ENCODE measurements at regions of chr1 and their contacts with region 1.

Region 1: DNA sequence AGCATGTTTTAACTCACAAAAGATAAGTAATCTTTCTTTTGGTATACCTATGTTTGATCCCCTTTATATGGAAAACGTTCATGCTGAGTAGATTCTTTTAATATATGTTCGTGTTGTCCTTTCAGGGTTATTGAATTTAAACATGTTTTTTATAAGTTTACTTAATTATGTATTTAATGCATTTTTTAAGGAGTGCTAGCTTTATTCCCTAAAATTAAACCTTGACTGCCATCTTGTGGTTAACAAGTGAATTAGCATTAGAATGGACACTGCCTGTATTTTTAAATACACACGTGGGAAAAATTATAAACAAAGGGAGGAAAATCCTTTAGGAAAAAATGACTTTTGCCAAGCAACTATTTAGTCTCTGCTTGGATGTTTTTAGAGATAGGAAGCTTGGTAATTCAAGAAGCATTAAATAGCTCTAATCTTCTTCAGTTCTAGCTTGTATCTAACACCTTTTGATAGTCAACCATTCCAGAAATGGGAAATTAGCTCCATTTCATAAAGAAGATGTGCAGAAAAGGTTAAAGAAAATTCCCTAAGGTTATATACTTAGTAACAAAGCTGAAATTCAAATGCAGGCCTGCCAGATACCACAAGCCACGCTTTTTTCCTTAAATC is 43.0 kb downstream of the UBE2U start:
- H3K4me3 Mint-ChIP-seq: no peak overlapping the region
- H3K27ac Mint-ChIP-seq: no peak overlapping the region
- H3K4me1 Mint-ChIP-seq: peaks cover 10% of the 10 kb centered on the region
- H3K27me3 Mint-ChIP-seq: peaks cover 11% of the 10 kb centered on the region

Region 2: DNA sequence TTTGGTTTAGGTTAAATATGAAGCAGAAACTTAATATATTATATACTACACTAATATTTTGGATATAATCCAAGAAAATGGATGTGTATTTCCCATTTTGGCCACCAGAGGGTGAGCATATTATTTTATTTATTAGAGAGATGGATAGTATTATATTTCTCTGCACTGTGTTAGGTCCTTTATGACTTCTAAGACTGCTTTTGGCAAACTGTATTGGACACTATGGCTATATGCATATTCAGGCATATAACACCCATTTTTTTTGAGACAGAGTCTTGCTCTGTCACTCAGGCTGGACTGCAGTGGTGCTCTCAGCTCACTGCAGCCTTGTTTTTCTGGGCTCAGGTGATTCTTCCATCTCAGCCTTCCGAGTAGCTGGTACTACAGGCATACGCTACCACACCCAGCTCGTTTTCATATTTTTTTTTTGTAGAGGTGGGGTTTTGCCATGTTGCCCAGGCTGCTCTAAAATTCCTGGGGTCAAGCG is 671.0 kb before region 1 on chr1:
- intact Hi-C with region 1: loop called (anchors 5 kb)
- H3K4me3 Mint-ChIP-seq: no peak overlapping the region
- H3K27ac Mint-ChIP-seq: no peak overlapping the region
- H3K4me1 Mint-ChIP-seq: peaks cover 5% of the 10 kb centered on the region
- H3K27me3 Mint-ChIP-seq: no peaks in the 10 kb centered on the region

Region 3: DNA sequence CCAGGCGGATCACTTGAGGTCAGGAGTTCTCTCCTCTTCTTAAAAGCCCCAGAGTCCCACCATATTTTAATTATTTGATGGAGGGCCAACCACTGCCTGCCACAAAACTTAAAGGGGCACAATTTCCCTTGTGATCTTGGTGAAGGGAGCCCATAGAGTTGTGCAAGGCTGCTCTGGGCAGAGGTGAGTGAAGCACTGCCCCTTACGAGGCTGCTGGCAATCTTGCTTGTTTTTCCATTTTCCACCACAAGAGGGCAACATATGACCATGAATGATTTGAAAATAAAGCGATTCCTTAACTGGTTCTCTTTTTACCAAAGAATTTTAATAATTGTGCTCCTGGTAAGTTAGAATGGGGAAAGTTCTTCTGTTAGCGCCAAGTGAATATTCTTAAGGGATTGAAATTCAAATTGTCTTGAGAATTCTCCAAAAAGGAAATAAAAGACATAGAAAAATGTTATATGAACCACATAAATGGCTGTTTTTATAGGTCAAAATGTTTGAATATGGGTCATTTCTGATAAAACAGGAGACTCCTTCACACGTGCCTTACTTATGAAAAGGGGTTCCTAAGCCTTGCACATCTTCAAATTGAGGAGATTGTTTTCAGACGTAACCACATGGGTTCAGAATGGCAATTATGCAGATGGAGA is 630.5 kb before region 1 on chr1:
- intact Hi-C with region 1: loop called (anchors 1 kb)
- H3K4me3 Mint-ChIP-seq: no peak overlapping the region
- H3K27ac Mint-ChIP-seq: no peak overlapping the region
- H3K4me1 Mint-ChIP-seq: peaks cover 10% of the 10 kb centered on the region
- H3K27me3 Mint-ChIP-seq: no peaks in the 10 kb centered on the region

Region 4: GRCh38 chr1:63691701-63692425 is 554.5 kb before region 1 on chr1:
- intact Hi-C with region 1: loop called (anchors 2 kb)
- H3K4me3 Mint-ChIP-seq: no peak overlapping the region
- H3K27ac Mint-ChIP-seq: no peak overlapping the region
- H3K4me1 Mint-ChIP-seq: no peaks in the 10 kb centered on the region
- H3K27me3 Mint-ChIP-seq: no peaks in the 10 kb centered on the region

Region 5: DNA sequence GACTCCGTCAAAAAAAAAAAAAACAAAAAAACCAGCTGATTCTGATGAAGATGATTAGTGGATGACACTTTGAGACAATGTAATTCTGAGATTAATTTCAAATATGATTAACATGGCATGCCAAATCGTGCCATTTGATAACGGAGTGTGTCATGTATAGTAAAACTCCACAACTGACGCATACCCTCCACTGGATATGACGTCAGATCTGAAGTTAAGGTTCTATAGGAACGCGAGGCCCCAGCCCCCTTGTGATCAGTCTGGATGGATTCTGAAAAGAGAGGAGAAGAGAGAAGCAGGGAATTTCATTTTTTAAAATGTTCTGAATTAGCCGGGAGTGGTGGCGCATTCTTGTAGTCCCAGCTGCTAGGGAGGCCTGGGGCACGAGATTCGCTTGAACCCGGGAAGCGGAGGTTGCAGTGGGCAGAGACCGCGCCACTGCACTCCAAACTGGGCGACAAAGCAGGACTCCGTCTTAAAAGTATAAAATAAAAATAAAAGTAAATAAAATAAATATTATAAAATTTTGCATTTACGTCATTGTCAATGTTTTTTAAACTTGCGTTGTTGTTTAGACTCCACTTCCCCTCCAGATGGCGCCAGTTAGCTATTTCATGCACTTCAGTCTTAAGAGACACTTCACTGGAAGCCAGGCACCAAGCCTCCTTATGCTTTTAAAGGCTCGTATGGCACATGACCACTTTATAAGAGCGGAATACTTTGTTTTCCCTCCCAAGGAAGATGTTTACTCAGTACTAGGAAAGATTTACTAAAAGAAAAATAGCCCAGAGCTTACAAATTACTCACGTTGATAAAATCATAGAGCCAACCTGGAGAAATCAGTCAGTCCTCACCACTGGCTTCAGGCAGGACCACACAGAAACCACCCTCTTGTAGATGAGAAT is 22.5 kb after region 1 on chr1:
- intact Hi-C with region 1: no loop called
- H3K4me3 Mint-ChIP-seq: no peak overlapping the region
- H3K27ac Mint-ChIP-seq: no peak overlapping the region
- H3K4me1 Mint-ChIP-seq: no peaks in the 10 kb centered on the region
- H3K27me3 Mint-ChIP-seq: no peaks in the 10 kb centered on the region

Region 6: GRCh38 chr1:64363111-64363510 is 116.7 kb after region 1 on chr1:
- intact Hi-C with region 1: no loop called
- H3K4me3 Mint-ChIP-seq: no peak overlapping the region
- H3K27ac Mint-ChIP-seq: no peak overlapping the region
- H3K4me1 Mint-ChIP-seq: no peaks in the 10 kb centered on the region
- H3K27me3 Mint-ChIP-seq: no peaks in the 10 kb centered on the region